Posterior cingulate gyrus (tissue), 11 donors: ENCODE measurements at regions of chr1 and their contacts with region 1.

Region 1: GRCh38 chr1:19251305-19252196 is at the starts of genes EMC1 and MRTO4:
- DNase-seq: peak; percentile 83 to 98 (median 91)

Region 2: DNA sequence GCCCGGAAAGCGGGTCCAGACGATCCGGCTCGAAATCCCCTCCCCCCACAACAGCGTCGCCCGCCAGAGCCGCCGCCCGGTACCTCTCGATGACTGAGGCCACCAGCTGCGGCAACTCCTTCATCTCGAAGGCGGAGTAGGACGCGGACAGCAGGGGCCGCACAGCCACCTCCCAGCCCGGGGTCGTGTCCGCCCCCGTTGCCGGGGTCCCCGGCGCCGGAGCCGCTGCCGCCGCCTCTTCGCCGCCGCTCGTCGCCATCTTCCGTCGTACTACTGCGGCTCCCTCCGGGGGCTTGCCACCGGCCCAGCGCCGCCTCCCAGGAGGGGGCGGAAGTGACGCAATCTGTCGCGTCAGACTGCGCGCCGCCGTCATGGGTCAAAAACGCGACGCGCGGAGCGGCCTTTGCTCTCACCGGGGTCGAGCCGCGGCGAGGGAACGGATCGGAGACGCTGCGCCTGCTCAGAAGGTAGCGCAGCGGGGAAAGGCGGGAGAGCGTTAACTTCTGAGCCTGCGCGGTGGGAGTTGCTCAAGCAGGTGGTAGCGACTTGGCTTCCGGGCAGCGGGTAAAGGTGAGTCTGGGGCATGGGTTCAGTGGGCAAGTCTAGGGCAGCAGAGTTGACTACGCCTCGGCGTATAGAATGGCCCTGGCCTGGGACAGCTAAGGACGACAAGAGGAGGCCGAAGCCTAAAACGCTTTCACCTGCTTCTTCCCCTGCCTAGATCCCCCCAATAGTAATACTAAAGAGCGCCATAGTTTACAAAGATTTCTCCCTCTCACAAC is 41.4 kb before region 1 on chr1 and contains the start of gene UBR4:
- intact Hi-C with region 1: loop called (anchors 5 kb)
- DNase-seq: peak; percentile 89 to 99 (median 92)

Region 3: DNA sequence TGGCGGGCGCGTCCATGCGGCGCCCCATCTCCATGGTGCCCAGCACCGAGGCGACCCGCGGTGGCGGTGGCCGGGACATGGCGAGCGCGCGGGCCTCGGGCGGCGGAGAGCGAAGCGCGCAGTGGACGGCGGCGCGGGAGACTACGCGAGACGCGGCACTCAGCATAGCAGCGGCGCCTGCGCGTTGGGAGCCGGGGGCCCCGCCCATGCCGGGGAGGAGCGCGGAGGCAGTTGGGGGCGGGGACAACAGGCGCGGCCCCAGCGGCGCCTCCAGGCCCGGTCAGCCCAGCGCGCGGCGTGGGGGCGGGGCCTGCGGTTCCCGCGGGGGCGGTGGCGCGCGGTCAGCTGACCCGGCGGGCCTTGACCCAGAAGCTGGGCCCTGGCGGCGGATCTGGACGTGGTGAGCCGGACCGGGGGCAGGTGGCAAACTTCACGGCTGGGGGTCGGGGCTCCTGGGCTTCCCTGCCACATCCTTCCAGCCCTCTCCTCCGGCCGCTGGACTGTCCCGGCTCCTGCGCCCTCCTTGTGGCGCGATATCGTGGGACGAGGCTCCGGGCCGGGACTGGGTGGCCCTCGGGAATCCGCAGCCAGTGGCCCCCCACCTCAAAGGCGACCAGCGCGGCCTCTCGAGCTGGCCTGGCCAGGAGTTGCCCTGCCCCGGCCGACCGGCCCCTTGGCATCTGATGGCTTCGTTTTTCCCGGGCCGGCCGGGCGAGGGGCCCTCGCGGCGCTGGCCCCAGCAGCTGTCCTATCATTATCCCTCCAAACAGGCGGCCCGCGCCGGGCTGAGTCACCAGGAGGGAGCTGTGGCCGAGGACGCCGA is 60.6 kb after region 1 on chr1 and contains the starts of genes AKR7A2 and SLC66A1:
- intact Hi-C with region 1: loop called (anchors 1 kb)
- DNase-seq: peak; percentile 84 to 99 (median 93)